Activated T-helper 1 cell treated with anti-CD3 and anti-CD28 coated beads, Interleukin-12 subunit alpha, Interleukin-12 subunit beta, Interleukin-2, Interleukin-4 antibody, amounts not matched to agents 30 ng/mL and 10 ng/mL and 1 ng/mL, durations not matched to agents 14 hours and 24 hours and 36 hours (primary cell): ENCODE measurements at regions of chr16 and their contacts with region 1.

Region 1: GRCh38 chr16:26598061-26598460 is 468.7 kb upstream of the C16orf82 start:
- DNase-seq: peak; percentile 84
- H3K4me3 Mint-ChIP-seq: peak overlapping the region; percentile 48
- H3K27ac Mint-ChIP-seq: peak overlapping the region; percentile 97
- H3K4me1 Mint-ChIP-seq: peaks cover 85% of the 10 kb centered on the region
- H3K27me3 Mint-ChIP-seq: no peaks in the 10 kb centered on the region

Region 2: DNA sequence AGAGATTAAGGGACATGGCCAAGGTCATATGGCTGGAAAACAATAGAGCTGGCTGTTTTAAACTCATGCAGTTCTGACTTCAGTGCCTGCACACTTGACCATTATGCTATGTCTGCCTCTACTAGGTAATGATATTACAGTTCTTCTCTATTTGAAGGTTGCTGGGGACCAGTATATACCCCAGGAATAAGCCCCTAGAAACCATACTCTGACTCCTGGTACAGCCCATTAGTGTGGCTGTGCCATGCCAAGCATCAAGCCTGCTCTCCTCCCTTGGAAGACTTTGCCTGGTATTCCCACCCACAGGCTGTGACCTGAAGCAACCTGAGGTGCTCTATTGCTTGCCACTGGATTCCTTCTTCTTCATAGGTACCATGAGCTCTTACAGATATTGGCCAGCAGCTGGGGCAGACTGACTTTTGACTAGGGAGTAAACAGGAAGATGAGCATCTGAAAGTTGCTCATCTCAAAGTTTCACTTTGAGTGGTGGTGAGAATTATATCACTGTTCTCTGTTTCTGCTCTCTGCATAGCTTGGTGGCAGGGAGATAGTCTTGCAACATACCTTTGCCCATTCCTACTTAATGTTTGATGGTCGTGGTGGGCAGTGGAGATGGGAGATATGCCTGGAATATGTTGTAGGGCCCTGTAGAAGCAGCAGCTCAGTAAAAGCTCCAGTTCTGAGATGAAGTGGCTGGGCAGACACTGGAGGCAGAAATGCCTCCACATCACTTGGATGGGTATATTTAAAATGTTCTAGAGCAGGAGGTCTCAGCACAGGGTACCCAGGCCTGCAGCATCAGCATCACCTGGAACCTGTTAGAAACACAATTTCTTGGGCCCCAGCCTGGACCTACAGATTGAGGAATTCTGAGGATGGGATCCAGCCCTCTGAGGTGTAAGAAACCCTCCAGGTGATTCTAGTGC is 631.6 kb before region 1 on chr16:
- intact Hi-C with region 1: loop called (anchors 1 kb)
- DNase-seq: peak; percentile 26
- H3K4me3 Mint-ChIP-seq: peak overlapping the region; percentile 49
- H3K27ac Mint-ChIP-seq: peak overlapping the region; percentile 89
- H3K4me1 Mint-ChIP-seq: peaks cover 50% of the 10 kb centered on the region
- H3K27me3 Mint-ChIP-seq: peaks cover 6% of the 10 kb centered on the region

Region 3: DNA sequence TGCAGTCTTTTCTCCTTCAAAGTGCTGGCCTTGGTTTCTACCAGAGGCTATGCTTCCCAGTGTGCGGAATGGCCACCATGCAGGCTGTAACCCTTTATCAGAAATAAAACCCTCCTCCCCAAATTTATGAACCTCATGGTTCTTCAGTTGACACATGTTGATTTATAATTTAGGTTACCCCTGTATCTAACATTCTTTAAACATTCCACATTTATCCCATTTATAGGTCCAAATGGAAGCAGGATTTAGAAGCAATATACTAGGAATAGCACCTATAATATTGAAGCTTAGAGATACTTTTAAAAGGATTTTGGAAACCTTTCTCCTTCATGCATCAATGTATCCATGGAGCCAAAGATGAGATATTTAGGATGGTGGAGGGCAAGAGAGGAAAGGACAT is 29.9 kb after region 1 on chr16:
- intact Hi-C with region 1: loop called (anchors 5 kb)
- DNase-seq: no peak
- H3K4me3 Mint-ChIP-seq: no peak overlapping the region
- H3K27ac Mint-ChIP-seq: no peak overlapping the region
- H3K4me1 Mint-ChIP-seq: peaks cover 15% of the 10 kb centered on the region
- H3K27me3 Mint-ChIP-seq: peaks cover 2% of the 10 kb centered on the region

Region 4: GRCh38 chr16:26672206-26672605 is 74.1 kb after region 1 on chr16:
- intact Hi-C with region 1: loop called (anchors 1 kb)
- DNase-seq: no peak
- H3K4me3 Mint-ChIP-seq: peak overlapping the region; percentile 34
- H3K27ac Mint-ChIP-seq: peak overlapping the region; percentile 83
- H3K4me1 Mint-ChIP-seq: peaks cover 43% of the 10 kb centered on the region
- H3K27me3 Mint-ChIP-seq: peaks cover 3% of the 10 kb centered on the region

Region 5: GRCh38 chr16:27408012-27408601 is 810.0 kb after region 1 on chr16:
- intact Hi-C with region 1: loop called (anchors 2 kb)
- DNase-seq: no peak
- H3K4me3 Mint-ChIP-seq: peak overlapping the region; percentile 100
- H3K27ac Mint-ChIP-seq: peak overlapping the region; percentile 100
- H3K4me1 Mint-ChIP-seq: peaks cover 82% of the 10 kb centered on the region
- H3K27me3 Mint-ChIP-seq: no peaks in the 10 kb centered on the region